HepG2 (cell line): ENCODE measurements at regions of chr5 and their contacts with region 1.

Region 1: DNA sequence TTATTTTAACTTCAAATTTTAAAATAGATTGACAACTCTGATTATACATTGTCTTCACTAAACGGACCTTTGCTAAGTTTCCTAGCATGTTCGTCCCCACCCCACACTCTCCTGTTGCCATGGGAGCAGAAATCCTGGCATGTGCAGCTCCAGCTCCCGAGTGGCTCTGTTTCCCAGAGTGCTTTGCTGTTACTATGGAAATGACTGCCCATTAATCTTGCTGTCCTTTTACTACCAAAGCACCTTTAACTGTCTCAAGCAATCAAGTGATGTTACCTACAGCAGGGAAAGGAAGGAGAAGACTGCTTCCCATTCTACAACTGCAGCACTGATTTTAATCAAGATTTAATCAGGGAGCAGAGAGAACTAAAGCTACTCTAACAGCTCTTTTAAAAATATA is 212.0 kb upstream of the KIF2A start:
- DNase-seq: no peak
- ATAC-seq: no peak
- H3K4me3 ChIP-seq: no peak overlapping the region
- H3K27ac ChIP-seq: no peak overlapping the region
- H3K4me1 ChIP-seq: no peaks in the 10 kb centered on the region
- H3K27me3 ChIP-seq: no peaks in the 10 kb centered on the region; a peak in 1 of 5 replicates
- CTCF ChIP-seq: no peak
- EP300 ChIP-seq: no peak
- POLR2A ChIP-seq: no peak
- RAD21 ChIP-seq: no peak

Region 2: GRCh38 chr5:60830581-60831127 is 1263.3 kb before region 1 on chr5:
- CTCF ChIA-PET with region 1: no interaction called
- POLR2A ChIA-PET with region 1: no interaction called
- in situ Hi-C with region 1: no loop called
- intact Hi-C with region 1: loop called (anchors 10 kb)
- DNase-seq: no peak
- ATAC-seq: no peak
- H3K4me3 ChIP-seq: no peak overlapping the region
- H3K27ac ChIP-seq: no peak overlapping the region
- H3K4me1 ChIP-seq: no peaks in the 10 kb centered on the region
- H3K27me3 ChIP-seq: no peaks in the 10 kb centered on the region
- CTCF ChIP-seq: no peak
- EP300 ChIP-seq: no peak
- POLR2A ChIP-seq: no peak
- RAD21 ChIP-seq: no peak

Region 3: GRCh38 chr5:61974680-61975079 is 119.3 kb before region 1 on chr5:
- CTCF ChIA-PET with region 1: no interaction called
- POLR2A ChIA-PET with region 1: no interaction called
- in situ Hi-C with region 1: no loop called
- intact Hi-C with region 1: no loop called
- DNase-seq: no peak
- ATAC-seq: no peak
- H3K4me3 ChIP-seq: no peak overlapping the region
- H3K27ac ChIP-seq: no peak overlapping the region
- H3K4me1 ChIP-seq: no peaks in the 10 kb centered on the region
- H3K27me3 ChIP-seq: no peaks in the 10 kb centered on the region
- CTCF ChIP-seq: no peak
- EP300 ChIP-seq: no peak
- POLR2A ChIP-seq: no peak
- RAD21 ChIP-seq: no peak

Region 4: GRCh38 chr5:62065050-62065449 is 28.9 kb before region 1 on chr5:
- CTCF ChIA-PET with region 1: no interaction called
- POLR2A ChIA-PET with region 1: no interaction called
- in situ Hi-C with region 1: no loop called
- intact Hi-C with region 1: no loop called
- DNase-seq: no peak
- ATAC-seq: no peak
- H3K4me3 ChIP-seq: no peak overlapping the region
- H3K27ac ChIP-seq: no peak overlapping the region
- H3K4me1 ChIP-seq: no peaks in the 10 kb centered on the region
- H3K27me3 ChIP-seq: no peaks in the 10 kb centered on the region
- CTCF ChIP-seq: no peak
- EP300 ChIP-seq: no peak
- POLR2A ChIP-seq: no peak
- RAD21 ChIP-seq: no peak

Region 5: GRCh38 chr5:62082370-62082801 is 11.6 kb before region 1 on chr5:
- CTCF ChIA-PET with region 1: no interaction called
- POLR2A ChIA-PET with region 1: no interaction called
- in situ Hi-C with region 1: no loop called
- intact Hi-C with region 1: no loop called
- DNase-seq: no peak
- ATAC-seq: no peak
- H3K4me3 ChIP-seq: no peak overlapping the region
- H3K27ac ChIP-seq: no peak overlapping the region
- H3K4me1 ChIP-seq: no peaks in the 10 kb centered on the region
- H3K27me3 ChIP-seq: peaks cover 3 to 30% of the 10 kb centered on the region in 2 experiments; a peak in 3 of 5 replicates
- CTCF ChIP-seq: no peak
- EP300 ChIP-seq: no peak
- POLR2A ChIP-seq: no peak
- RAD21 ChIP-seq: no peak

Region 6: DNA sequence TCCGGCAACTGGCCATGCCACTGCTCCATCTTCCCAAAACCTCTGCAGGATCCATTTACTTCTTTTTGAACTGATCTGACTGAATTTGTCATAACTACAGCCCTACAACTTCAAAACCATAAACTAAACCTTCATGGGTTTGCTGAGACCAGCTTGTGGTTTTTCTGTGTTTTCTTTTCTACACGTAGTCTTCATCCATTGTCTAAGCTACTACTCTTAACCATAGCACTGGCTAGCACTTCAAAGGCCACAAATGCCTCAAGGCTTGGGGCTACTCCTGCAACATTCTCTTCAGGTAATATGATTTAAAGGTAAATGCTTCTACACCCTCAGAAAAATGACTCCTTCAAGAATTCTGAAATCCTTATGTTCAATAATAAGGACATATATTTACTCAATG is 203.1 kb after region 1 on chr5:
- CTCF ChIA-PET with region 1: no interaction called
- POLR2A ChIA-PET with region 1: no interaction called
- in situ Hi-C with region 1: no loop called
- intact Hi-C with region 1: no loop called
- DNase-seq: no peak
- ATAC-seq: no peak
- H3K4me3 ChIP-seq: no peak overlapping the region
- H3K27ac ChIP-seq: no peak overlapping the region
- H3K4me1 ChIP-seq: no peaks in the 10 kb centered on the region
- H3K27me3 ChIP-seq: 0 out of 5 replicates have a peak, but pooled peaks cover 0 to 3% of the 10 kb centered on the region in 2 experiments
- CTCF ChIP-seq: no peak
- EP300 ChIP-seq: no peak
- POLR2A ChIP-seq: no peak
- RAD21 ChIP-seq: no peak